PC-9 (cell line): ENCODE measurements at regions of chr10 and their contacts with region 1.

Region 1: GRCh38 chr10:77641788-77642397 is 4.3 kb upstream of the KCNMA1 start:
- DNase-seq: peak; percentile 61 to 72
- H3K4me3 ChIP-seq: no peak overlapping the region
- H3K27ac ChIP-seq: no peak overlapping the region
- H3K4me1 ChIP-seq: peaks cover 11% of the 10 kb centered on the region; the same call in 1 of the 2 replicates
- H3K27me3 ChIP-seq: no peaks in the 10 kb centered on the region
- CTCF ChIP-seq: peak; percentile 98

Region 2: GRCh38 chr10:77173615-77174461 is 468.1 kb before region 1 on chr10:
- CTCF ChIA-PET with region 1: interaction called, 7 read pairs
- POLR2A ChIA-PET with region 1: no interaction called
- intact Hi-C with region 1: loop called (anchors 1 kb)
- DNase-seq: peak; percentile 63 to 71
- H3K4me3 ChIP-seq: no peak overlapping the region
- H3K27ac ChIP-seq: no peak overlapping the region
- H3K4me1 ChIP-seq: peaks cover 6% of the 10 kb centered on the region
- H3K27me3 ChIP-seq: no peaks in the 10 kb centered on the region
- CTCF ChIP-seq: peak; percentile 98

Region 3: DNA sequence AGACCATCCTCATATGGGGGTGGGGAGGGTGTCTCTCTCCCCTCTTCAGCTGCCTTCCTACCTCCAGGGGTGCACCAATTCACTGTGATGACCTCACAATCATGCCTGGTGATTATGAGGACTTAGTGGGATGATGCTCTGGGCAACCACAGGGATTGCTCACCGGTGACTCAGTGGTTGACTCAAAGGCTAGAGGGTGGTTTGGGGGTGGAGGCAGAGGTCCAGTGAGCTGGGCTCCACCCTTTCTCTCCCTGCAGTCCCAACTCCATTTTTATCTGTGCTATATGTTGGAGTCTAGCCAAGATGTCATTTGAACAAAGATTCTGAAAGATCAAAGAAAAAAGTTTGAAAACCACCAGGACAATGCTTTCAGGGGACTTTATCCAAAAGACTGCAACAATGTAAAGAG is 291.2 kb before region 1 on chr10:
- CTCF ChIA-PET with region 1: no interaction called
- POLR2A ChIA-PET with region 1: no interaction called
- intact Hi-C with region 1: loop called (anchors 1 kb)
- DNase-seq: peak; percentile 86 to 93
- H3K4me3 ChIP-seq: no peak overlapping the region
- H3K27ac ChIP-seq: peak overlapping the region; percentile 22; the same call in 1 of the 2 replicates
- H3K4me1 ChIP-seq: peaks cover 26% of the 10 kb centered on the region
- H3K27me3 ChIP-seq: no peaks in the 10 kb centered on the region
- CTCF ChIP-seq: no peak

Region 4: GRCh38 chr10:77391605-77392235 is 250.2 kb before region 1 on chr10:
- CTCF ChIA-PET with region 1: interaction called, 6 read pairs
- POLR2A ChIA-PET with region 1: no interaction called
- intact Hi-C with region 1: loop called (anchors 1 kb)
- DNase-seq: peak; percentile 53 to 74
- H3K4me3 ChIP-seq: no peak overlapping the region
- H3K27ac ChIP-seq: no peak overlapping the region
- H3K4me1 ChIP-seq: peaks cover 40% of the 10 kb centered on the region
- H3K27me3 ChIP-seq: no peaks in the 10 kb centered on the region
- CTCF ChIP-seq: peak; percentile 87

Region 5: GRCh38 chr10:77494327-77494726 is 147.6 kb before region 1 on chr10:
- CTCF ChIA-PET with region 1: no interaction called
- POLR2A ChIA-PET with region 1: no interaction called
- intact Hi-C with region 1: loop called (anchors 5 kb)
- DNase-seq: no peak
- H3K4me3 ChIP-seq: no peak overlapping the region
- H3K27ac ChIP-seq: no peak overlapping the region
- H3K4me1 ChIP-seq: peaks cover 10% of the 10 kb centered on the region; the same call in 1 of the 2 replicates
- H3K27me3 ChIP-seq: no peaks in the 10 kb centered on the region
- CTCF ChIP-seq: peak; percentile 49; the same call in 1 of the 2 replicates

Region 6: GRCh38 chr10:77603534-77603927 is 38.4 kb before region 1 on chr10:
- CTCF ChIA-PET with region 1: interaction called, 11 read pairs
- POLR2A ChIA-PET with region 1: no interaction called
- intact Hi-C with region 1: no loop called
- DNase-seq: peak in 1 of 2 experiments; percentile 30
- H3K4me3 ChIP-seq: no peak overlapping the region
- H3K27ac ChIP-seq: no peak overlapping the region
- H3K4me1 ChIP-seq: peaks cover 43% of the 10 kb centered on the region
- H3K27me3 ChIP-seq: no peaks in the 10 kb centered on the region
- CTCF ChIP-seq: no peak